A549 (cell line): ENCODE measurements at regions of chr19 and their contacts with region 1.

Region 1: DNA sequence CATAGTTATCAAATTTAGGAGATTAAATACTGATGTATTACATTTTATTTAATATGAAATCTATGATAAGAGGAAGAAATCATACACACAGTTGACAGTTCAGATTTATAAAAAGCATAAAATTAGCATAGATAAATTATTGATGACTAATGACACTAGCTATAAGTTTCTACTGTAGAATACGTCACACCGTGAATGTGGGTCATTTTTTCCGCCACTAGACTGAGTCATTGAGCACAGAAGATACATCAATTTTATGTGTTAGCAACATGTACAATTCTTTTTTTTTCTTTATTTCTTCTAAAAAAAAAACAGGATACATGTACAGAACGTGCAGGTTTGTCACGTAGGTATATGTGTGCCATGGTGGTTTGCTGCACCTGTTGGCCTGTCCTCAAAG is 22.2 kb downstream of the AP2S1 start:
- DNase-seq: no peak
- ATAC-seq: no peak
- H3K4me3 ChIP-seq: no peak overlapping the region
- H3K27ac ChIP-seq: no peak overlapping the region
- H3K4me1 ChIP-seq: peaks cover 10% of the 10 kb centered on the region
- CTCF ChIP-seq: no peak
- EP300 ChIP-seq: no peak
- POLR2A ChIP-seq: no peak
- RAD21 ChIP-seq: no peak

Region 2: DNA sequence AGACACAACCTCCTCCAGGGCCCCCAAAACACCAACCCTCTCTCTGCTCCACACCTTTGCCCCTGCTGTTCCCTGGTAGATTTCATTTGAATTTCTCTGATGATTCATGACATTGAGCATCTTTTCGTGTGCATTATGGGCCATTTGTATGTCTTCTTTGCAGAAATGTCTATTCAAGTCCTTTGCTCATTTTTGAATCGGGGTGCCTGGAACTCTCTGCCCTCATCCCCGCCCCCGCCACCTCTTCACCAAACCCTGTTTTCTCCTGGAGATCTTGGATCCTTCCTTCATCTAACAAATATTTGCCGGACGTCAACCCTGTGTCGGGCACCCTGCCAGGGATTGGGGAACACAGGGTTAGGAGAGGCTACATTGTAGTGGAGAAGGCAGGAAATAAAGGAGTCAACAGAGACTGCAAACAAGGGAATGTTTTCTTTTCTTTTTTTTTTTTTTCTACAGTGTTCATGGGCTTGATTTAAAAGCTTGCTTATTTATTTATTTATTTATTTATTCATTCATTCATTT is 14.6 kb before region 1 on chr19:
- CTCF ChIA-PET with region 1: interaction called, 21 read pairs
- POLR2A ChIA-PET with region 1: no interaction called
- DNase-seq: peak; percentile 47 to 84
- ATAC-seq: peak; percentile 65 to 75
- H3K4me3 ChIP-seq: no peak overlapping the region
- H3K27ac ChIP-seq: peak overlapping the region; percentile 38 to 74
- H3K4me1 ChIP-seq: peaks cover 18% of the 10 kb centered on the region
- CTCF ChIP-seq: no peak
- EP300 ChIP-seq: no peak
- POLR2A ChIP-seq: no peak
- RAD21 ChIP-seq: no peak

Region 3: GRCh38 chr19:46924874-46925547 is 96.5 kb after region 1 on chr19:
- CTCF ChIA-PET with region 1: no interaction called
- POLR2A ChIA-PET with region 1: no interaction called
- DNase-seq: peak; percentile 40 to 70
- ATAC-seq: peak; percentile 72 to 78
- H3K4me3 ChIP-seq: peak overlapping the region; percentile 1; the same call in 1 of the 3 replicates
- H3K27ac ChIP-seq: peak overlapping the region; percentile 66 to 81
- H3K4me1 ChIP-seq: peaks cover 64% of the 10 kb centered on the region
- CTCF ChIP-seq: no peak
- EP300 ChIP-seq: no peak
- POLR2A ChIP-seq: no peak
- RAD21 ChIP-seq: no peak; a peak in 1 of 5 replicates